ENCODE measurements at regions of chr5 and their contacts with region 1.

Region 1: DNA sequence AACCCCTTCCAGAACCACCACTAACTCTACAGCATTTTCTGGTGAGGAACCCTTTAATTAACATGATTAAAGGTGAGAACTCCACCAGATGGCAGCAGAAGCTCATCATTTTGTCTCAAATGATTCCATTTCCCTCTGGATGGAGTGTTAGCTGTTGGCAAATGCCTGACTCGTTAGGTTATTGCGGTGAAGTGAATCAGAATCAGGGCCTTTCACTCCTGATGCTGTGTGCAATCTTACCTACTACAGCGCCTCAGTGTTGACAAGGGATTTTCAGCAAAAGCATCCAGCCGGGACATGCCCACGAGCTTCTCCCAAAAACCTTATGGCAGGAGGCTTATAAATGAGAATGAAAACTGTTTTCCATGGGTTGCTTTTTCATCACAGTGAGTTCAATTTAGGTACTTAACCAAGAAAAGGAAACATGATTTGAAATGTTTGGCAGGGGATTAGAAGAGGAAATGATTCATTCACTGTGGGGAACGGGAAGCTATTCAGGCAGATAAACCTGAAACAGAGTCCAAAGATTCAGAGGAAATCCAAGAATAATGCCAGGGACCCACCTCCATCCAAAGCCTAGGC is 48.0 kb upstream of the CAST start:
- DNase-seq: peak; percentile 92
- H3K4me3 ChIP-seq: peak overlapping the region in 2 of 3 experiments; percentile 25 to 72
- H3K27ac ChIP-seq: peak overlapping the region; percentile 92
- H3K4me1 ChIP-seq: peaks cover 28% of the 10 kb centered on the region
- H3K27me3 ChIP-seq: no peaks in the 10 kb centered on the region
- CTCF ChIP-seq: peak; percentile 33 to 51
- POLR2A ChIP-seq: no peak

Region 2: GRCh38 chr5:96662725-96663513 is 48.7 kb after region 1 on chr5:
- CTCF ChIA-PET with region 1: interaction called, 29 read pairs
- POLR2A ChIA-PET with region 1: no interaction called
- dilution Hi-C with region 1: no loop called
- intact Hi-C with region 1: loop called (anchors 1 kb)
- DNase-seq: peak; percentile 90
- H3K4me3 ChIP-seq: peak overlapping the region; percentile 49 to 86 (median 84)
- H3K27ac ChIP-seq: peak overlapping the region; percentile 23
- H3K4me1 ChIP-seq: peaks cover 17% of the 10 kb centered on the region
- H3K27me3 ChIP-seq: no peaks in the 10 kb centered on the region
- CTCF ChIP-seq: no peak
- POLR2A ChIP-seq: peak; percentile 60

Region 3: GRCh38 chr5:96702503-96703383 is 88.5 kb after region 1 on chr5:
- CTCF ChIA-PET with region 1: interaction called, 22 read pairs
- POLR2A ChIA-PET with region 1: no interaction called
- dilution Hi-C with region 1: no loop called
- intact Hi-C with region 1: loop called (anchors 1 kb)
- DNase-seq: peak; percentile 90
- H3K4me3 ChIP-seq: peak overlapping the region; percentile 21 to 63 (median 52)
- H3K27ac ChIP-seq: peak overlapping the region; percentile 78
- H3K4me1 ChIP-seq: peaks cover 20% of the 10 kb centered on the region
- H3K27me3 ChIP-seq: no peaks in the 10 kb centered on the region
- CTCF ChIP-seq: no peak
- POLR2A ChIP-seq: peak; percentile 80

Region 4: GRCh38 chr5:96734871-96735325 is 120.7 kb after region 1 on chr5:
- CTCF ChIA-PET with region 1: interaction called, 31 read pairs
- POLR2A ChIA-PET with region 1: no interaction called
- dilution Hi-C with region 1: no loop called
- intact Hi-C with region 1: no loop called
- DNase-seq: no peak
- H3K4me3 ChIP-seq: no peak overlapping the region
- H3K27ac ChIP-seq: no peak overlapping the region
- H3K4me1 ChIP-seq: peaks cover 3% of the 10 kb centered on the region
- H3K27me3 ChIP-seq: no peaks in the 10 kb centered on the region
- CTCF ChIP-seq: no peak
- POLR2A ChIP-seq: no peak

Region 5: DNA sequence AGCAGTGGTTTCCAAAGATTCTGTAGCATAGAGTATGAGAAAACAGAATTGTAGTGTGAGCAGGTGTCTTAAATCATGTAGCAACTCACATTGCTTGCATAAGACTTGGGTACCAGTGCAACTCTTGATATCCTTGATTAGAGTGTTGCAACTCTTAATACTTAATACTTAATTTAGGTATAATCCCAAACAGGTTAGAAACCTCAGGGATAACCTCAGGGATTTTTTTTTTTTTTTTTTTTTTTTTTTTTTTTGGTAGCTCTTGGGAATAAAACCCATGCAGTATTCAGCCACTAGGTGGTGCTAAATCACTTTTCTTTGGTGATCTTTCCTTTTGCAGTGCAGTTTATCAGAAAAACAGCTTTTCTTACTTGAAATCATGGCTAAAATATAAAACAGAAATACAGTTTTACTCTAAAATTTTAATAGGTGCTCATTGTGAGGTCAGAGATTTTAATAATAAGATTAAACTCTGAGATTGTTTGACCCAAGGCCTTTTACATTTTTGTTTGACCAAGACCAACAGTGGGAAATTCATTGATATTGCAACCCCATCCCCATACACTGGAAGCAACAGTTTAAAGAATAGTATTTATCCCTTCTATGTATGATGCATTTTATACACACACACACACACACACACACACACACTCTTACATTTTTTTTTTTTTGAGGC is 138.3 kb after region 1 on chr5:
- CTCF ChIA-PET with region 1: interaction called, 58 read pairs
- POLR2A ChIA-PET with region 1: interaction called, 3 read pairs
- dilution Hi-C with region 1: no loop called
- intact Hi-C with region 1: loop called (anchors 2 kb)
- DNase-seq: peak; percentile 71
- H3K4me3 ChIP-seq: no peak overlapping the region
- H3K27ac ChIP-seq: no peak overlapping the region
- H3K4me1 ChIP-seq: peaks cover 3% of the 10 kb centered on the region
- H3K27me3 ChIP-seq: no peaks in the 10 kb centered on the region
- CTCF ChIP-seq: peak; percentile 36 to 55
- POLR2A ChIP-seq: no peak

Region 6: GRCh38 chr5:96968074-96968473 is 353.9 kb after region 1 on chr5:
- CTCF ChIA-PET with region 1: no interaction called
- POLR2A ChIA-PET with region 1: no interaction called
- dilution Hi-C with region 1: no loop called
- intact Hi-C with region 1: no loop called
- DNase-seq: peak; percentile 89
- H3K4me3 ChIP-seq: no peak overlapping the region
- H3K27ac ChIP-seq: peak overlapping the region; percentile 66
- H3K4me1 ChIP-seq: peaks cover 25% of the 10 kb centered on the region
- H3K27me3 ChIP-seq: no peaks in the 10 kb centered on the region
- CTCF ChIP-seq: no peak
- POLR2A ChIP-seq: no peak

Region 7: DNA sequence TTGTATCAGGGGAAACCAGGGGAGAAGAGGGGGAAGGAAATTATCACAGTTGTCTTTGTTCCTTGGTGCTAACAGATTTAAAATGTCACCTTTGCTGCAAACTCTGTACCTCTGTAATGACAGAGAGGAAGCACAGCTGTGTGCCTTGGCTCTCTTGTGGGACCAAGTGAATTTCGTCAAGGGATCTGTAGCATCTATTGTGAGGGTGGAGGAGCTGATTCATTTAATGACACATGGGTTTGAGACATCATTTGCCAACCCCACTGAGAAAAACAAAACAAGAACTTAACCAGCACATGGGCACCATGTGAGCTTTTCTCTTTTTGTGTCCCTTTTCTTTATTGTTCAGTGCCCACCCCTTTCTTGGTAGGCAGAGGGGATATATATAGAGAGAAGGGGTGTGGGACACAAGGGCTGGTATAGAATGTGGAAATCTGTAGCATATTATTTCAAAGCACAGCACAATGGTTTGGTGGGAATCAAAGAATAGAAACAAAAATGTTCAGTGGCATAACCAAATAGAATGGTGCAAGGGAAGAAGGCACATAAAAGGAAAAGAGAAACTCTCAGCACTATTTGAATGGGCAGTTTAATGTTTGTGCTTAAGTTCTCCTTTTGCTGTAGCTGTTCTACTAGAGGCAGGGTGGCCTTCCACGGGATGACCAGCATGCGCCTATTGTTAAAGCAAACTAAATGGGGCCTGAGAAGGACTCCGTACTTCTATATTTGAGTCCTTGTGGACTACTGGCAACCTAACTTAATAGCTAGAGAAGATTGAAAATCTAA is 464.9 kb after region 1 on chr5:
- CTCF ChIA-PET with region 1: no interaction called
- POLR2A ChIA-PET with region 1: no interaction called
- dilution Hi-C with region 1: no loop called
- intact Hi-C with region 1: no loop called
- DNase-seq: no peak
- H3K4me3 ChIP-seq: no peak overlapping the region
- H3K27ac ChIP-seq: no peak overlapping the region
- H3K4me1 ChIP-seq: peaks cover 5% of the 10 kb centered on the region
- H3K27me3 ChIP-seq: peaks cover 0 to 3% of the 10 kb centered on the region in 2 experiments
- CTCF ChIP-seq: no peak
- POLR2A ChIP-seq: no peak

Region 8: DNA sequence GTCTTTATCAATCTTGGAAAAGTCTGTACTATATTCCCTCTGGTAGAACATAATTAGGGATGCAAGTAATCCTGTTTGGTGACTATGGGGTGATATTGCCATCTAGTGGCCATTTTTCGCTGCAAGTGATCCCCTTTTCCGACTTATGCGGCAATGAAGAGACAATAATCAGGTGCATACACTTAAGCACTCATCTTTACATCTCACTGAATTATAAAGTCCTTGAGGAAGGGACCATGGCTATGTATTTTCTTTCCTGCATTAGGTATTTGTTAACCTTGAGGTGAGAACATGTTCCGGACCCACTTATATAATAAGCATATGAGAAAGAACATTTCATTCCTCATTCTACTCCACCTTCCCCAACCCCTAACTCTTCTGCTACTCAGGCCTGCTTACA is 547.8 kb after region 1 on chr5:
- CTCF ChIA-PET with region 1: interaction called, 12 read pairs
- POLR2A ChIA-PET with region 1: no interaction called
- dilution Hi-C with region 1: no loop called
- intact Hi-C with region 1: loop called (anchors 1 kb)
- DNase-seq: peak; percentile 86
- H3K4me3 ChIP-seq: no peak overlapping the region
- H3K27ac ChIP-seq: no peak overlapping the region
- H3K4me1 ChIP-seq: no peaks in the 10 kb centered on the region
- H3K27me3 ChIP-seq: no peaks in the 10 kb centered on the region
- CTCF ChIP-seq: peak; percentile 68 to 79
- POLR2A ChIP-seq: no peak